T-cell (primary cell): ENCODE measurements at regions of chr17 and their contacts with region 1.

Region 1: GRCh38 chr17:45258981-45259380 is 2.9 kb downstream of the SPATA32 start:
- DNase-seq: no peak
- ATAC-seq: no peak
- H3K4me3 ChIP-seq: no peak overlapping the region
- H3K4me3 Mint-ChIP-seq: no peak overlapping the region
- H3K27ac ChIP-seq: no peak overlapping the region
- H3K27ac Mint-ChIP-seq: peak overlapping the region in 1 of 2 donors; percentile 1
- H3K4me1 ChIP-seq: peaks cover 6 to 62% of the 10 kb centered on the region in 2 experiments
- H3K4me1 Mint-ChIP-seq: peaks cover 49 to 60% (median 53%) of the 10 kb centered on the region in 3 donors
- H3K27me3 ChIP-seq: no peaks in the 10 kb centered on the region
- H3K27me3 Mint-ChIP-seq: no peaks in the 10 kb centered on the region

Region 2: DNA sequence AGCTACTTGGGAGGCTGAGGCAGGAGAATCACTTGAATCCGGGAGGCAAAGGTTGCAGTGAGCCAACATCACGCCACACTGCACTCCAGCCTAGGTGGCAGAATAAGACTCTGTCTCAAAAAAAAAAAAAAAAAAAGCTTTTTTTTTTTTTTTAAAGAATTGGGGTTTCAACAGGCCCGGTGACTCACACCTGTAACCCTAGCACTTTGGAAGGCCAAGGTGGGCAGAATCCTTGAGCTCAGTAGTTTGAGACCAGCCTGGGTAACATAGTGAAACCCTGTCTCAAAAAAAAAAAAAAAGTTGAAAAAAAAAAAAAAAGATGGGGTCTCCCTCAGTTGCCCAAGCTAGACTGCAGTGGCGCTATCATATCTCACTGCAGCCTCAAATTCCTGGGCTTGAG is 104.0 kb before region 1 on chr17:
- CTCF ChIA-PET with region 1: interaction called in 1 of 2 experiments, 10 read pairs
- POLR2A ChIA-PET with region 1: interaction called in 1 of 2 experiments, 3 read pairs
- DNase-seq: no peak
- ATAC-seq: no peak
- H3K4me3 ChIP-seq: no peak overlapping the region
- H3K4me3 Mint-ChIP-seq: no peak overlapping the region
- H3K27ac ChIP-seq: no peak overlapping the region
- H3K27ac Mint-ChIP-seq: peak overlapping the region in 1 of 2 donors; percentile 58
- H3K4me1 ChIP-seq: peaks cover 24 to 55% of the 10 kb centered on the region in 2 experiments
- H3K4me1 Mint-ChIP-seq: peaks cover 52 to 55% (median 53%) of the 10 kb centered on the region in 3 donors
- H3K27me3 ChIP-seq: no peaks in the 10 kb centered on the region
- H3K27me3 Mint-ChIP-seq: no peaks in the 10 kb centered on the region